ENCODE measurements at regions of chr13 and their contacts with region 1.

Region 1: GRCh38 chr13:33228648-33229445 is 56.7 kb downstream of the STARD13 start:
- DNase-seq: no peak
- ATAC-seq: peak; percentile 62
- H3K4me3 Mint-ChIP-seq: no peak overlapping the region
- H3K27ac Mint-ChIP-seq: no peak overlapping the region
- H3K4me1 Mint-ChIP-seq: peaks cover 2% of the 10 kb centered on the region
- H3K27me3 Mint-ChIP-seq: peaks cover 4% of the 10 kb centered on the region
- CTCF ChIP-seq: peak; percentile 97

Region 2: GRCh38 chr13:33110713-33111413 is 118.0 kb before region 1 on chr13:
- CTCF ChIA-PET with region 1: no interaction called
- POLR2A ChIA-PET with region 1: no interaction called
- intact Hi-C with region 1: no loop called
- DNase-seq: no peak
- ATAC-seq: peak; percentile 63
- H3K4me3 Mint-ChIP-seq: peak overlapping the region; percentile 68
- H3K27ac Mint-ChIP-seq: peak overlapping the region; percentile 59
- H3K4me1 Mint-ChIP-seq: peaks cover 58% of the 10 kb centered on the region
- H3K27me3 Mint-ChIP-seq: peaks cover 23% of the 10 kb centered on the region
- CTCF ChIP-seq: no peak

Region 3: GRCh38 chr13:33169273-33169980 is 59.4 kb before region 1 on chr13:
- CTCF ChIA-PET with region 1: no interaction called
- POLR2A ChIA-PET with region 1: no interaction called
- intact Hi-C with region 1: no loop called
- DNase-seq: no peak
- ATAC-seq: no peak
- H3K4me3 Mint-ChIP-seq: no peak overlapping the region
- H3K27ac Mint-ChIP-seq: no peak overlapping the region
- H3K4me1 Mint-ChIP-seq: no peaks in the 10 kb centered on the region
- H3K27me3 Mint-ChIP-seq: peaks cover 6% of the 10 kb centered on the region
- CTCF ChIP-seq: no peak

Region 4: DNA sequence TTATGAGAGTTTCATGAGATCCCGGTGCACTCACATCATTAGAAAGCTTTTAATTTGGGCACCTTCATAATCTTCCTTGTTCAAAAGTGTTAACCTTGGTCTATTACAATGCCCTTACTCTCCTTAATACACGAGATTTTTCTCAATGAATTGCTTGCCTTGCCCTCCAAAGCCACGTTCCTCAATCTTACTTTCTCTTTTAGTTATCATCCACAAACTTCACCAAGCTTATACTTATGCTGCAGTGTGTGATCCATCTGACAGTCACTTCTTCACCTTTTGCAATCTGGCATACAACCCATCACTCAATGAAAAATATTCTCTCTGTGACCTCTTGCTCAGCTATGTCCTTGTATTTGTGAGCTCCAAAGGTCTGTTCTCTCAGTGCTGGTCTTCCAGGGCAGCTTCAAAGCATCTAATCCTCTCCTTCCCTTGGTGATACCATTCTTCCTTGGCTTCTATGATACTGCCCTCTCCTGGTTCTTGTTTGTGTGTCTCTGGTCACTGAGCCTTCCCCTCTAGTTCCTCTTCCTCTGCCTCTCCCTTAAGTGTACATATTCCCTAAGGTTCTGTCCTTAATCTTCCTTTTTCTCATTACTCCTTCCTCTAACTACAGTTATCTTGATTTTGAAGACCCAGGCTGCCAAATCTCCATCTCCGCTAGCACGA is 258.9 kb after region 1 on chr13:
- CTCF ChIA-PET with region 1: interaction called, 4 read pairs
- POLR2A ChIA-PET with region 1: no interaction called
- intact Hi-C with region 1: loop called (anchors 2 kb)
- DNase-seq: no peak
- ATAC-seq: no peak
- H3K4me3 Mint-ChIP-seq: no peak overlapping the region
- H3K27ac Mint-ChIP-seq: no peak overlapping the region
- H3K4me1 Mint-ChIP-seq: no peaks in the 10 kb centered on the region
- H3K27me3 Mint-ChIP-seq: peaks cover 1% of the 10 kb centered on the region
- CTCF ChIP-seq: no peak

Region 5: GRCh38 chr13:33723772-33724435 is 495.1 kb after region 1 on chr13:
- CTCF ChIA-PET with region 1: interaction called, 29 read pairs
- POLR2A ChIA-PET with region 1: interaction called, 3 read pairs
- intact Hi-C with region 1: loop called (anchors 1 kb)
- DNase-seq: no peak
- ATAC-seq: peak; percentile 72
- H3K4me3 Mint-ChIP-seq: no peak overlapping the region
- H3K27ac Mint-ChIP-seq: no peak overlapping the region
- H3K4me1 Mint-ChIP-seq: peaks cover 21% of the 10 kb centered on the region
- H3K27me3 Mint-ChIP-seq: peaks cover 21% of the 10 kb centered on the region
- CTCF ChIP-seq: no peak

Region 6: GRCh38 chr13:35157143-35157755 is 1928.4 kb after region 1 on chr13:
- CTCF ChIA-PET with region 1: no interaction called
- POLR2A ChIA-PET with region 1: no interaction called
- intact Hi-C with region 1: loop called (anchors 1 kb)
- DNase-seq: no peak
- ATAC-seq: no peak
- H3K4me3 Mint-ChIP-seq: no peak overlapping the region
- H3K27ac Mint-ChIP-seq: no peak overlapping the region
- H3K4me1 Mint-ChIP-seq: peaks cover 1% of the 10 kb centered on the region
- H3K27me3 Mint-ChIP-seq: no peaks in the 10 kb centered on the region
- CTCF ChIP-seq: peak; percentile 42

Region 7: GRCh38 chr13:35164324-35164932 is 1935.6 kb after region 1 on chr13:
- CTCF ChIA-PET with region 1: interaction called, 7 read pairs
- POLR2A ChIA-PET with region 1: no interaction called
- intact Hi-C with region 1: loop called (anchors 1 kb)
- DNase-seq: no peak
- ATAC-seq: peak; percentile 52
- H3K4me3 Mint-ChIP-seq: no peak overlapping the region
- H3K27ac Mint-ChIP-seq: no peak overlapping the region
- H3K4me1 Mint-ChIP-seq: peaks cover 8% of the 10 kb centered on the region
- H3K27me3 Mint-ChIP-seq: no peaks in the 10 kb centered on the region
- CTCF ChIP-seq: peak; percentile 63